ENCODE measurements at regions of chr19 and their contacts with region 1.

Region 1: GRCh38 chr19:43668406-43669158 is 1.4 kb downstream of the PLAUR start:
- DNase-seq: peak; percentile 85 to 97 (median 91)
- ATAC-seq: peak; percentile 87
- H3K4me3 ChIP-seq: peak overlapping the region; percentile 72 to 73
- H3K4me3 Mint-ChIP-seq: peak overlapping the region; percentile 88
- H3K27ac ChIP-seq: peak overlapping the region; percentile 42 to 43
- H3K27ac Mint-ChIP-seq: peak overlapping the region; percentile 57
- H3K4me1 ChIP-seq: peaks cover 42% of the 10 kb centered on the region
- H3K4me1 Mint-ChIP-seq: peaks cover 43% of the 10 kb centered on the region
- H3K27me3 ChIP-seq: no peaks in the 10 kb centered on the region
- H3K27me3 Mint-ChIP-seq: no peaks in the 10 kb centered on the region
- CTCF ChIP-seq: no peak

Region 2: DNA sequence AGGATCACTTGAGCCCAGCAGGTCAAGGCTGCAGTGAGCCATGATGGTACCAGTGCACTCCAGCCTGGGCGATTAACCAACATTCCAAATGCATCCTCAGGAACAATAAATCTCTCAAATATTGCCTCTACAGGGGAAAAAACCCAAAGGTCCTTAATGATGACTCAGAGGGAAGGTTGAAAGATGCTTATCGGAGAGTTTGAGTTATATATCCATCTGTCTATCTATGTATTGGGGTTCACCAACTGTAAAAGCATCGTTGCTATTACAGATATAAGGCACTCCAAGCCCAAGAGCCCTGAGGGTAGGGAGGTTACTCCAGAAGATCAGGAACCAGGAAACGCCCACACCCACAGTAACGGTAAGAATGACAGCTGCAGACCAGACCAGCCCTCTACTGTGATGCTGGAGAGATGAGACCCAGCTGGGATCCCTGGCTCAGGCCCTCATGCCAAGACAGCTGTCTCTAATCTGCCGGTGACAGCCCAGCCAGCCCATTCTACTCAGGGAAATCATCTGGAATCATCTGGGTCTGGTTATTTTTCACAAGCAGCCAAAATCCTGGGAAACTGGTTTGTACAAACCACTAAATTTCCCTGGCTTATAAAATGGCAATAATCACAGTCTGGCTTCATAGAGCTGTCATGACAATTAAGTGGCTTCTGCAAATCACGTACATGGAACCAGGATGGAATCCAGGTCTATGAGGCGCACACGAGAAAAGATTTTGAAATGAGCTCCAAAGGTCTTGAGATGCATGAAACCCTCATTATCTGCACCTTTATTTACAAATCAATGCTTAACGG is 230.1 kb before region 1 on chr19:
- CTCF ChIA-PET with region 1: interaction called, 3 read pairs
- POLR2A ChIA-PET with region 1: interaction called, 4 read pairs
- intact Hi-C with region 1: loop called in 1 of 2 experiments (anchors 10 kb)
- DNase-seq: peak in 3 of 9 experiments; percentile 16 to 33 (median 22)
- ATAC-seq: peak; percentile 25
- H3K4me3 ChIP-seq: peak overlapping the region in 1 of 2 experiments; percentile 10
- H3K4me3 Mint-ChIP-seq: peak overlapping the region; percentile 44
- H3K27ac ChIP-seq: peak overlapping the region; percentile 64 to 88
- H3K27ac Mint-ChIP-seq: peak overlapping the region; percentile 96
- H3K4me1 ChIP-seq: peaks cover 33% of the 10 kb centered on the region
- H3K4me1 Mint-ChIP-seq: peaks cover 56% of the 10 kb centered on the region
- H3K27me3 ChIP-seq: no peaks in the 10 kb centered on the region
- H3K27me3 Mint-ChIP-seq: no peaks in the 10 kb centered on the region
- CTCF ChIP-seq: no peak

Region 3: DNA sequence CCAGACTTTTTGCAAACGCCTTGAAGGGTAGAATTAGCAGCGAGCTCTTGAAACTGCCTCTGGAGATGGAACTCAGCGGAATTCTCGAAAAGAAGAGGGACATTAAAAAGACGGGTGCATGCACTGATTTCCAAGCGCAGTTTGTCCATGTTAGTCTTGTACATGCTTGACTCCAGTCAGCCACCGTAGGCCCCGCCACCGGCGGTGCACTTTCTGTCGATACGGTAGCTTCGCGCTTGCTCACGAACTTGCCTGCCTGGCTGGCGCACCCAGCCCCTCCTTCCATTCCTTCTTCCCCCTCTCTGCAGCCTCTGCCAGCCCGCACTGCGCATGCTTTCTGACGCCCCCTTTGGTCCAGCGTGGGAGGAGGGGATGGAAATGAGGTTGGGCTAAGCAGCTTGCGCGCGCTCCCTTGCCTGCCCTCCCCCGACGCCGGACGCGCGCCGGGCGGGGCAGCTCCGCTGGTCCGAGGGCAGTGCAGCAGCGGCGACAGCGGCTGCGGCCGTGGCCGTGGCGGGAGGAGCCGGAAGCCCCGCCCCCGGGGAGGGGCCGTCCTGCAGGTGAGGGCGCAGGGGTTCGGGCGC is 135.5 kb before region 1 on chr19 and contains the start of gene ZNF575:
- CTCF ChIA-PET with region 1: no interaction called
- POLR2A ChIA-PET with region 1: interaction called, 3 read pairs
- intact Hi-C with region 1: loop called in 1 of 2 experiments (anchors 1 kb)
- DNase-seq: peak; percentile 63 to 94 (median 87)
- ATAC-seq: peak; percentile 43
- H3K4me3 ChIP-seq: peak within 1 kb of the TSS; percentile 65 to 79
- H3K4me3 Mint-ChIP-seq: peak within 1 kb of the TSS; percentile 98
- H3K27ac ChIP-seq: peak within 1 kb of the TSS; percentile 55 to 76
- H3K27ac Mint-ChIP-seq: peak within 1 kb of the TSS; percentile 97
- H3K4me1 ChIP-seq: peaks cover 7% of the 10 kb centered on the region
- H3K4me1 Mint-ChIP-seq: peaks cover 19% of the 10 kb centered on the region
- H3K27me3 ChIP-seq: no peaks in the 10 kb centered on the region
- H3K27me3 Mint-ChIP-seq: no peaks in the 10 kb centered on the region
- CTCF ChIP-seq: no peak
- total RNA-seq, gene ZNF575: 2.4 to 3.4 TPM

Region 4: DNA sequence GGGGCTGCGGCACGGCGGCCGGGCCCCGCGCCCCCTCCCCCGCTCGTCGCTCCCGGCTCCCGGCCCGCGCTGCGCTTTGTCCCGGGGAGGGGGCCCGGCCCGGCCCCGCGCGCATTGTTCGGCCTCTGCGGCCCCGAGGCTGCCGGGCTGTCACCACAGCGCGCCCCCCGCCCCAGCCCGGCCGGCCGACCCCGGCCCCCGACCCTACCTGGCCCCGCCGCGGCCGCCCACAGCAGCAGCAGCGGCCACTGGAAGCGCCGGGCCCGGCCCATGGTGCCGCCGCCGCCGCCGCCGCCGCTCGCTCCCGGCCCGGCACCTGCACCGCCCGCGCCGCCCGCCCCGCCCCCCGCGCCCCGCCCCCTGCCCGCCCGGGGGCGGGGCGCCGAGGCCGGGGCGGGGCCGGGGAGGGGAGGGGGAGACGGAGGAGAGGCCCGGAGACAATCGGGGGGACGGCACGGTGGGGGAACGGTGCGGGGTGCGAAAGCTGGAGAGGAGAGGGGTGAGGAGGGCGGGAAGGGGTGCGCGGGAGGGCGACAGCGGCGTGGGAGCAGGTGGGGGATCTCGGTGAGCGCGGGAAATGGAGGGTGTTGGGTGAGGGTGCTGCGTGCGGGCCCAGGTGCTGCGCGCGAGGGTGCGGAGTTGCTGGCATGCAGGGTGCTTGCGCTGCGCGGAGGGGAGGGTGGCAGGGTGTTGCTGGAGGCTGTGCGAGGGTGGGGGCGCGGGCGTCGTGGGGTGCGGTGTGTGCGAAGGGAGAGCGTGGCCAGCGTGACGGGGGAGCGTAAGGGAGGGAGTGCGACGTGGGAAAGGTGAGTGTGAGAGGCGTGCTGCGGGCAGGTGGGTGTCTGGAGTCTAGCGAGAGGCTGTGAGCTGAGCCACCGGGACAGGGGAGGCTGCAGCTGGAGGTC is 28.8 kb before region 1 on chr19 and contains the start of gene CADM4:
- CTCF ChIA-PET with region 1: no interaction called
- POLR2A ChIA-PET with region 1: no interaction called
- intact Hi-C with region 1: loop called in 1 of 2 experiments (anchors 1 kb)
- DNase-seq: peak in 8 of 9 experiments; percentile 28 to 72 (median 53)
- ATAC-seq: peak; percentile 87
- H3K4me3 ChIP-seq: peak within 1 kb of the TSS; percentile 49 to 62
- H3K4me3 Mint-ChIP-seq: peak within 1 kb of the TSS; percentile 85
- H3K27ac ChIP-seq: no peak within 1 kb of the TSS
- H3K27ac Mint-ChIP-seq: no peak within 1 kb of the TSS
- H3K4me1 ChIP-seq: peaks cover 11% of the 10 kb centered on the region
- H3K4me1 Mint-ChIP-seq: peaks cover 16% of the 10 kb centered on the region
- H3K27me3 ChIP-seq: peaks cover 9 to 19% of the 10 kb centered on the region in 2 experiments
- H3K27me3 Mint-ChIP-seq: peaks cover 33% of the 10 kb centered on the region
- CTCF ChIP-seq: no peak
- total RNA-seq, gene CADM4: 0.19 TPM in 1 of 2 experiments, not detected in the other

Region 5: GRCh38 chr19:43743022-43743421 is 74.4 kb after region 1 on chr19:
- CTCF ChIA-PET with region 1: interaction called, 5 read pairs
- POLR2A ChIA-PET with region 1: no interaction called
- intact Hi-C with region 1: loop called in 1 of 2 experiments (anchors 2 kb)
- DNase-seq: no peak
- ATAC-seq: no peak
- H3K4me3 ChIP-seq: no peak overlapping the region
- H3K4me3 Mint-ChIP-seq: no peak overlapping the region
- H3K27ac ChIP-seq: no peak overlapping the region
- H3K27ac Mint-ChIP-seq: no peak overlapping the region
- H3K4me1 ChIP-seq: no peaks in the 10 kb centered on the region
- H3K4me1 Mint-ChIP-seq: peaks cover 8% of the 10 kb centered on the region
- H3K27me3 ChIP-seq: no peaks in the 10 kb centered on the region
- H3K27me3 Mint-ChIP-seq: no peaks in the 10 kb centered on the region
- CTCF ChIP-seq: no peak